ENCODE measurements at regions of chr5 and their contacts with region 1.

Region 1: DNA sequence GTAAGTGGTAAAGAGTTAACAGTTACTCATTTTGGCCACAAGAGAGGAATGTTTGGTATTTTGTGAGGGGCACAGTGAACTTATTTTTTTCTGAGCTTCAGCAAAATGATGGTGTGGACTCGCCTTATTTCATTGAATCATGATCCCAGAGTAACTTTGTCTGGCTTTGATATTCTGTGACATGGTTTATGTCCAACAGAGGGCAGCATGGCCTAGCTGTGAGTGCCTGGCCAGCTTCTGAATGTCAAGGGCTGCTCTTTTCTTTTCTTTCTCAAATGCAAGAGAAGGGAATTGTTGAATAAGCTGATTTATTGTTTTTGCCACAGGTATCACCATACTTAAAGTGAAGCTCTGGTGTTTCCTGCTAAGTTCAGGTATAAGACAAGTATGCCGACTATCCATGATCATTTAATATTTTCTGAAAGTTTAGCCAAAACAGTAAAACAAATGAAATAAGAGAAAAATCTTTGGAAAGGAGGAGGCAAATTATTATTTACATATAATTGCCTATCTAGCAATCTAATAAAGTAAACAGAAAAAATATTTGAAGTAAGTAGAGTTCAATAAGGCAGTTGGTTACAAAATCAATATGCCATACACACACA is 31.7 kb downstream of the MRPL22 start:
- DNase-seq: peak in 3 of 4 experiments; percentile 24 to 54 (median 27)
- ATAC-seq: peak; percentile 88
- H3K4me3 ChIP-seq: no peak overlapping the region
- H3K27ac ChIP-seq: no peak overlapping the region
- H3K4me1 ChIP-seq: peaks cover 0 to 7% of the 10 kb centered on the region in 2 experiments; a peak in 3 of 5 replicates
- H3K27me3 ChIP-seq: no peaks in the 10 kb centered on the region
- CTCF ChIP-seq: peak; percentile 71 to 74 (median 72)
- EP300 ChIP-seq: no peak
- POLR2A ChIP-seq: no peak
- RAD21 ChIP-seq: peak; percentile 34 to 62; a peak in 3 of 4 replicates

Region 2: GRCh38 chr5:155027993-155028629 is 55.5 kb after region 1 on chr5:
- CTCF ChIA-PET with region 1: no interaction called
- POLR2A ChIA-PET with region 1: no interaction called
- in situ Hi-C with region 1: no loop called
- intact Hi-C with region 1: loop called (anchors 2 kb)
- DNase-seq: peak in 1 of 4 experiments; percentile 14
- ATAC-seq: peak; percentile 78
- H3K4me3 ChIP-seq: no peak overlapping the region
- H3K27ac ChIP-seq: no peak overlapping the region
- H3K4me1 ChIP-seq: no peaks in the 10 kb centered on the region
- H3K27me3 ChIP-seq: no peaks in the 10 kb centered on the region
- CTCF ChIP-seq: peak; percentile 38 to 42 (median 40); a peak in 4 of 6 replicates
- EP300 ChIP-seq: no peak
- POLR2A ChIP-seq: no peak
- RAD21 ChIP-seq: peak in 1 of 2 experiments; percentile 54; a peak in 2 of 4 replicates

Region 3: DNA sequence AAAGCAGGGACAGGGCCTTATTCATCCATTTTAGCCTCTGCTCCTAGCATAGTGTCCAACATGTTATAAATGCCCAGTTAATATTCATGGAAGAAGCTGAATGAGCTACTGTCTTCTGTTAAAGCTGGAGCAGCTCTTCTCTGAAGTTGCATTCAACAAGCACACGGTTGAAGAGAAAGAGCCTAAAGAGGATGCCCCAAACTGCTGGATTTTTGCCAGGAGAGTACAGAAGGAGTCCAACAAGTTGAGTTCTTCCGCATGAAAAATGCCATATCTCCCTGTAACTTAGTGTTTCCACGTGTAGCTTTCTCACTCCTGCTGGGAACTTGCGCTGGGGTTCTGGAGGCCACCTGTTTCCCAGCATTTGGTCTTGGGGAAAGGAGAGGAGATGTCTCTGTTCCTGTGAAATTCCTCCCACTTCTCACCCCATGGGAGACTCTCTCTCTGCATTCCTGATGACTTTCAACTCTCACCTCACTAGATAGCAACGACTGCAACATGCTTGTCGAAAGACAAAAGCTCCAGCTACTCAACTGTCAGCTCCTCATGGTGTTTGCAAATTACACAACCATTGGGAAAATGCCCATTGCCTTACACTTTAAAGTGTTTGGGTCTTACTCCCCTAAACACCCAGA is 163.8 kb after region 1 on chr5:
- CTCF ChIA-PET with region 1: no interaction called
- POLR2A ChIA-PET with region 1: no interaction called
- in situ Hi-C with region 1: no loop called
- intact Hi-C with region 1: loop called (anchors 5 kb)
- DNase-seq: no peak
- ATAC-seq: no peak
- H3K4me3 ChIP-seq: no peak overlapping the region
- H3K27ac ChIP-seq: no peak overlapping the region
- H3K4me1 ChIP-seq: no peaks in the 10 kb centered on the region
- H3K27me3 ChIP-seq: no peaks in the 10 kb centered on the region
- CTCF ChIP-seq: no peak
- EP300 ChIP-seq: no peak
- POLR2A ChIP-seq: no peak
- RAD21 ChIP-seq: no peak

Measured in K562 (cell line).